Activated CD4-positive, alpha-beta T cell treated with anti-CD3 and anti-CD28 coated beads, Interleukin-2, amount 10 ng/mL, durations not matched to agents 24 days and 14 days (primary cell): ENCODE measurements at regions of chr1 and their contacts with region 1.

Region 1: GRCh38 chr1:40161125-40161887 is at the start of gene RLF:
- DNase-seq: peak; percentile 99
- H3K4me3 Mint-ChIP-seq: no peak within 1 kb of the TSS
- H3K27ac Mint-ChIP-seq: no peak within 1 kb of the TSS
- H3K4me1 Mint-ChIP-seq: peaks cover 30% of the 10 kb centered on the region
- H3K27me3 Mint-ChIP-seq: peaks cover 2% of the 10 kb centered on the region
- total RNA-seq, gene RLF: 21.2 TPM in 2 replicates

Region 2: GRCh38 chr1:39061951-39062350 is 1099.4 kb before region 1 on chr1:
- intact Hi-C with region 1: no loop called
- DNase-seq: no peak
- H3K4me3 Mint-ChIP-seq: no peak overlapping the region
- H3K27ac Mint-ChIP-seq: no peak overlapping the region
- H3K4me1 Mint-ChIP-seq: no peaks in the 10 kb centered on the region
- H3K27me3 Mint-ChIP-seq: no peaks in the 10 kb centered on the region

Region 3: GRCh38 chr1:40185951-40186864 is 24.9 kb after region 1 on chr1:
- intact Hi-C with region 1: loop called (anchors 1 kb)
- DNase-seq: peak; percentile 82
- H3K4me3 Mint-ChIP-seq: peak overlapping the region; percentile 64
- H3K27ac Mint-ChIP-seq: peak overlapping the region; percentile 85
- H3K4me1 Mint-ChIP-seq: peaks cover 47% of the 10 kb centered on the region
- H3K27me3 Mint-ChIP-seq: no peaks in the 10 kb centered on the region

Region 4: GRCh38 chr1:40241362-40241761 is 80.1 kb after region 1 on chr1:
- intact Hi-C with region 1: loop called (anchors 5 kb)
- DNase-seq: no peak
- H3K4me3 Mint-ChIP-seq: peak overlapping the region; percentile 54
- H3K27ac Mint-ChIP-seq: peak overlapping the region; percentile 87
- H3K4me1 Mint-ChIP-seq: peaks cover 57% of the 10 kb centered on the region
- H3K27me3 Mint-ChIP-seq: no peaks in the 10 kb centered on the region

Region 5: DNA sequence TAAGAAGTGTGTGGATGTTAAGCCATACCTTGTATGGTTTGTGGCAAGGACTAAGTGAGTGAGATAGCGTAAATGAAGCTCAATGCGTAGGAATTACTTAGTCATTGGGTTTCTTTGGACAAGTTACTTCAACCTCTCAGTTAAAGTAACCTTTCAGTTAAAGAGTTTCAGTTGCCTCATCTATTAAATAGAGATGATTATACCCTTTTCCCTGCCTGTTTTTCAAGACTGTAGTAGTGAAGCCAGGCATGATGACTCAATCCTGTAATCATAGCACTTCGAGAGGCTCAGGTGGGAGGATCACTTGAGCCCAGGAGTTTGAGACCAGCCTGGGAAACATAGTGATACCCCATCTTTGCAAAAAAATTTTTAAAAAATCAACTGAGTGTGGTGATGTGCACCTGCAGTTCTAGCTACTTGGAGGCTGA is 103.1 kb after region 1 on chr1:
- intact Hi-C with region 1: loop called (anchors 1 kb)
- DNase-seq: no peak
- H3K4me3 Mint-ChIP-seq: peak overlapping the region; percentile 57
- H3K27ac Mint-ChIP-seq: peak overlapping the region; percentile 88
- H3K4me1 Mint-ChIP-seq: peaks cover 43% of the 10 kb centered on the region
- H3K27me3 Mint-ChIP-seq: no peaks in the 10 kb centered on the region

Region 6: GRCh38 chr1:40385437-40386358 is 224.4 kb after region 1 on chr1:
- intact Hi-C with region 1: loop called (anchors 2 kb)
- DNase-seq: peak; percentile 93
- H3K4me3 Mint-ChIP-seq: peak overlapping the region; percentile 88
- H3K27ac Mint-ChIP-seq: peak overlapping the region; percentile 99
- H3K4me1 Mint-ChIP-seq: peaks cover 79% of the 10 kb centered on the region
- H3K27me3 Mint-ChIP-seq: no peaks in the 10 kb centered on the region

Region 7: DNA sequence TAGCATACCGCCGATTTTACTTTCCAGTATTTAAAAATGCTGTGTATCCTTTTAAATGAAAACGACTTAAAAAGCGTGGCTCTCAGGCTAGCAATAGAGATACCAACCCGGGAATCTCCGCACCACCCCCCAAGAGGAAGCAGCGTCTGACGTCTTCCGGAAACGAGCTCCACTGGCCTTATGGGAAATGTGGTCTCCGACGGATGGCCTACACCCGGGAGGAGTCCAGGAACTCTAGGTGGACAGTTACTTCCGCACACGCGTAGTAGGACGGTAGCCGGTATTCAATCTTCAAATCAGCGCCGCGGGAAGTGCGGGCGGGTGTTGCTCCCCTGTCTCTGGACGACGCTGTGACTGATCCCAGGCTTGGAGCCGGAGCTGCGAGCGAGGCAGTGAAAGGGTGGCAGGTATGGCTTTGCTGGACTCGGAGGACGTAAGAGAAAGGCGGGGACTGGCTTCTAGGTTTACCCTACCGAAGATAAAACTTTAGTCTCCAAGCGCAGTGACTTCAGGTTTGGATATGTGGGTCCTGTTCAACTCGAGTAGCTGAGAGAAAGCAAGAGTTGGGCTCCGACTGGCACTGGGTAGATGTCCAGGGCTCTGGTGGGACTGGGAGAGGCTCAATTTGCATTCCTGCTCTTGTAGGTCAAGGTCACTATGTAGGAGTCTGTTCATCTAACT is 370.2 kb after region 1 on chr1 and contains the start of gene ZNF684:
- intact Hi-C with region 1: loop called (anchors 5 kb)
- DNase-seq: peak; percentile 96
- H3K4me3 Mint-ChIP-seq: peak within 1 kb of the TSS; percentile 97
- H3K27ac Mint-ChIP-seq: peak within 1 kb of the TSS; percentile 93
- H3K4me1 Mint-ChIP-seq: peaks cover 22% of the 10 kb centered on the region
- H3K27me3 Mint-ChIP-seq: peaks cover 12% of the 10 kb centered on the region
- total RNA-seq, gene ZNF684: 4.7 and 4.9 TPM in 2 replicates

Region 8: GRCh38 chr1:40563266-40563665 is 402.0 kb after region 1 on chr1:
- intact Hi-C with region 1: no loop called
- DNase-seq: no peak
- H3K4me3 Mint-ChIP-seq: no peak overlapping the region
- H3K27ac Mint-ChIP-seq: no peak overlapping the region
- H3K4me1 Mint-ChIP-seq: peaks cover 6% of the 10 kb centered on the region
- H3K27me3 Mint-ChIP-seq: peaks cover 2% of the 10 kb centered on the region